Transverse colon (tissue), 4 donors: ENCODE measurements at regions of chr7 and their contacts with region 1.

Region 1: GRCh38 chr7:44128721-44129582 is 5.6 kb upstream of the POLD2 start:
- DNase-seq: no peak
- H3K4me3 ChIP-seq: no peak overlapping the region
- H3K27ac ChIP-seq: no peak overlapping the region
- H3K4me1 ChIP-seq: peaks cover 0 to 4% (median 0%) of the 10 kb centered on the region in 4 donors
- H3K27me3 ChIP-seq: no peaks in the 10 kb centered on the region
- CTCF ChIP-seq: no peak
- EP300 ChIP-seq: no peak
- POLR2A ChIP-seq: no peak

Region 2: GRCh38 chr7:43944286-43944685 is 184.7 kb before region 1 on chr7:
- in situ Hi-C with region 1: no loop called
- intact Hi-C with region 1: no loop called
- DNase-seq: no peak
- H3K4me3 ChIP-seq: no peak overlapping the region
- H3K27ac ChIP-seq: no peak overlapping the region
- H3K4me1 ChIP-seq: peaks cover 0 to 15% (median 5%) of the 10 kb centered on the region in 4 donors
- H3K27me3 ChIP-seq: no peaks in the 10 kb centered on the region
- CTCF ChIP-seq: no peak
- EP300 ChIP-seq: no peak
- POLR2A ChIP-seq: no peak

Region 3: DNA sequence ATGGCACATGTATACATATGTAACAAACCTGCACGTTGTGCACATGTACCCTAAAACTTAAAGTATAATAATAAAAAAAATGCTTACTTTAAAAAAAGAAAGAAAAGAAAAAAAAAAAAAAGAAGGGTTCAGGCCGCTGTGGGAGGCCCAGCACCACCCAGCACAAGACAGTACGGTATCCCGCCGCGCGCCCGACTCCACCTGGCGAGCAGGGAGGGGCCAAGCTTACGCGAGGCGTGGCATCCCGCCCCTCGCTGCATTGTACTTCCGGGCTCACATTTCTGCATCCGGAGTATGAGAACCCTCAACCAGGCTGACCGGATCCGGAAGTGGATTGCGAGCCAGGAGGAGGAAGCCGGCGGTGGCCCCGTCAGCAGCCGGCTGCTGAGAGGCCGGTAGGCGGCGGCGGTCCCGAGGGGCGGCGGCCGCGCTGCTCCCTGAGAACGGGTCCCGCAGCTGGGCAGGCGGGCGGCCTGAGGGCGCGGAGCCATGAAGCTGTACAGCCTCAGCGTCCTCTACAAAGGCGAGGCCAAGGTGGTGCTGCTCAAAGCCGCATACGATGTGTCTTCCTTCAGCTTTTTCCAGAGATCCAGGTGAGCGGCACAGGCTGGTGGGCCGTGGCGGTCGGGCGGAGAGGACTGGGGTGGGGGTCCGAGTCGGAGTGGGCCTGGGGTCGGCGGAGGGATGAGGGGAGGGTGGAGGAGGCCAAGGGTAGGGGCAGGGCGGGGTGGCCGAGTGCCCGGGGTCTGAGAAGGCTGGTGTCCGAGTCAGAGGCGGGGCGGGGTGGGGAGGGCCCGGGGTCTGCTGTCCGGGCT is 71.9 kb after region 1 on chr7 and contains the start of gene YKT6:
- in situ Hi-C with region 1: no loop called
- intact Hi-C with region 1: loop called (anchors 2 kb)
- DNase-seq: peak; percentile 96
- H3K4me3 ChIP-seq: peak within 1 kb of the TSS; percentile 79 to 97 (median 89)
- H3K27ac ChIP-seq: peak within 1 kb of the TSS; percentile 79 to 88 (median 84)
- H3K4me1 ChIP-seq: peaks cover 0 to 24% (median 13%) of the 10 kb centered on the region in 4 donors
- H3K27me3 ChIP-seq: peaks cover 10% of the 10 kb centered on the region
- CTCF ChIP-seq: peak; percentile 56 to 87 (median 59)
- EP300 ChIP-seq: no peak
- POLR2A ChIP-seq: peak; percentile 82
- total RNA-seq, gene YKT6: 46.6 to 80.1 (median 68.0) TPM

Region 4: DNA sequence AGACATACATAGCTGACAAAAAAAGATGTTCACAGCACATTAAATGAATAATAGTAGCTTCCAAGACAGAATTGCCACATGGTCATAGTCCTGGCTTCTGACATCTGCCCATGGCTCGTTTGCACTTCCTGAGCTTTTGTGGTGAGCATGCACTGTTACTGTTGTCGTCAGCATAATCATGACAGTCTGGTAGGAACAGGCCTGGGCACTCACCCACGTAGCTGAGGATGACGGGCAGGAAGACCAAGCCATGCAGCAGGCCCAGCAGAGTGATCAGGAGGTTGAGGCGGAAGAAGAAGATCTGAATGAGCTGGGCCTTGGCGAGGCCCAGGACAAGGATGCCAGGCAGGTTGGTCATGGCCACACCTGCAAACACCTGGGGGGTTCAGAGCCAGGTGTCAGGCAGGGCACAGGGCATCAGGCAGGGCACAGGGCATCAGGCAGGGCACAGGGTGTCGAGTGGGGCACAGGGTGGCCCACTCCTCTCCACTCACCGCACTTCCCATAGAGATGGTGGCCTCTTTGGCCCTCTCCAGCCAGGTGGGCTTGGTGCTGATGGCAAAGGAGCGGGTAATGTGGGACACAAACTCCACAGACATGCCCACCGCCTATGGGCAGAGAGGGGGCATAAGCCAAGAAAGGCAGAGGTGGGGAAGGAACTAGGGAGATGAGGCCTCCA is 386.8 kb after region 1 on chr7:
- in situ Hi-C with region 1: no loop called
- intact Hi-C with region 1: no loop called
- DNase-seq: no peak
- H3K4me3 ChIP-seq: no peak overlapping the region
- H3K27ac ChIP-seq: no peak overlapping the region
- H3K4me1 ChIP-seq: peaks cover 0 to 4% (median 0%) of the 10 kb centered on the region in 4 donors
- H3K27me3 ChIP-seq: no peaks in the 10 kb centered on the region
- CTCF ChIP-seq: no peak
- EP300 ChIP-seq: no peak
- POLR2A ChIP-seq: no peak